GM13976 (cell line): ENCODE measurements at regions of chr10 and their contacts with region 1.

Region 1: DNA sequence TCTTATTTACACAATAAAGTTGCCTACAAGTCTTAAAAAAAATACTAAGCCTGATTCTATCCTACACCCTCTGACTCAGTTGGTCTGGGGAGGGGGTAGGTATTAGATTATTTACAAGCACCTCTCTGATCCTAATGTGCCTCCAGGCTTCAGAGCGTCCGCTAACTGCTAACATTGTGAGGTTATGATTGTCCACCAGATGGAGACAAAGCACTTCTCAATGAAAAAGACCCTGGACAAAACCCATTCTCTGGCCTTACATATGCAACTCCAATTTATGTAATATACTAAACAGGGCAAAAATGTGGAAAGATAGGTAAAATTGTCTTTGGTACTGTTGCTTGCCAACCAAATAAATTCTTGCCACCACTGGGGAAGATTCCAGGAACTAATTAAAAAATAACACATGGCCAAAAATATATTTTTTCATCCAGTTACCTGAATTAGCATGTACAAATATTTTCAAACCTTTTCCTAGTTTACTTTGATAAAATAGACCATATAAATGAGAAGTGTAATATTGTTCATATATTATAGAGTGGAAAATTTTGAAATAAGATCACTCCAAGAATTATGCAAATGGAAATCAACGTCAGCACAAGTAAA is 92.4 kb downstream of the KIF20B start:
- DNase-seq: peak; percentile 55
- CTCF ChIP-seq: peak; percentile 58

Region 2: DNA sequence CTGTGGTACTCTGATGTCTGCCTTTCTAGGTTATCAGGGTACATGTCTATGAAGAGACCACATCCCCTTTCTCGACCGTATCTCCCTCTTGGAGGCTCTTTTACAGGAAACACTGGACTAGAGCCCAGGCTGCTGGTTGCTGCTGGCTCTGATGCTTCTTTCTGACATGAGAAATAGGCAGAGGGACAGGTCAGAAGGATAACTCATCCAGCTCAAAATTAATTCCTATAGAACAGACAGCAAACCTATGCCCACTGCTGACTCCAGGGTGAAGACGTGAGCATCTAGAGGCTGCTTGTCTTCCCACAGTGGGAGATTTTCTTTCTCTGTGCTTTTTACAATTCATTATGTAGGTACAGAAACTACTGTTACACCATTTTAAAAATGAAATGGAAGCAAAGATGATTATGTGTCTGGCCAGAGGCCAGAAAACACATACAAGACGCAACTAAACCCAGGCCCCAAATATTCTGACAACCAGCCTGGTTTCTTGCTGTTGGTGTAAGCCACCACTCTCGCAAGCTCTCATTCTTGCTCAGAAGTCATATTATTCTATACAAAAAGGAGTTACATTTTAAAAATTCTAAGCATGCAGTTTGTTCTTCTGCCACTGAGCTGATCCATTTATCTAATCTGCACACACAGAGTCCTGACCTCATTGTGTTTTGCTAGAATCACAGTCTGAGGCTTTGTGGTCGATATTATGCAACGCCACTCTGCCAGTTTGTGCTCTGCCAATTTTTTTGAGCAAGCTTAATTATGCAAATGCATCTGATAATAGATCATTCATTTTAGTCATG is 331.9 kb after region 1 on chr10:
- in situ Hi-C with region 1: loop called (anchors 5 kb)
- DNase-seq: no peak
- CTCF ChIP-seq: no peak

Region 3: GRCh38 chr10:90245623-90246022 is 451.9 kb after region 1 on chr10:
- in situ Hi-C with region 1: no loop called
- DNase-seq: no peak
- CTCF ChIP-seq: no peak

Region 4: DNA sequence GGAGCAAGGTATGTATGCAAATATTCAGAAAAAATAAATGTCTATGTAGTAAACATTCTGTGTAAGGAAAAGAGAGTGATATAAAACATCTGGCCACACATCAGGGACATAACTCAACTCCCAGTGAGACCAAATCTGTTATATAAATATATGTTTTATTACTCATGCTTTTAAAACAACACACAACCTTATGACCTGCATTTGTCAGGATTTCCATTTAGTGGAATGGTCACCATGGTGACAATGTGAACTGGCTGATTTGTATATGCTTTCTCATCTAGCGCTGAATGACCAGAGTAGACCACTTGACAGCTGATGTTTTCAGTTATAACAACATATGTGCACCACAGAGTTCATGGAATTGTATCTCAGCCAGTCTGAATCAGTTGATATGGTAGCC is 512.4 kb after region 1 on chr10:
- in situ Hi-C with region 1: no loop called
- DNase-seq: no peak
- CTCF ChIP-seq: no peak

Region 5: DNA sequence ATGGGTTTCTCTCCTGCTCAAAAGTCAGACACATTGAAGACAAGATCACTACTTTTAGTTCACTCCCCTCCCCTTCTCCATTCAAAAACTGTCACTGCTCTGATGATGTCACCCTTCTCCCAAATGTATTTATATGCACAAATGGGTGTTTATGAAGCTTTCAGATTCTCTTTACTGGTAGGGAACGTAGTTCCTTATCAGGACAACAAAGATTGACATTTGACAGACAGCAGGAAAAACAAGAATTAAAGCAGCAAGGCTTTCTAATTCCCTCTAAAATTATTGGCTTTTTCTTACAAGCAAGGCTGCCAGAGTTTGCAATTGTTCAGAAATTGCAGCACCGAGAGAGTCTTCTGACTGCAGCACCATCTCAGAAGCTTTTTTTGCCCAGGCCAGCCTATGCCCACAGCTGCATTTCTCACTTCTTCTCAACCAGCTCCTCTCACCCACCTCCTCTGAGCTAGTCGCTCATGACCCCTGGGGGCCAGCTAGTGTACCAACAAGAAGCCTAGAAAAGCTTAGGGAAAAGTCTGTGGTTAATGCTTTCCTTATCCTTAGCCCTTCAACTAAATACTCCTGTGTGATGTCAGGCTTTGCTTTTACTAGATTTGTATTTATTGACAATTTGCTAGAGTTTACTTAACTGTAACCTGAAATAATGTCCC is 799.0 kb after region 1 on chr10:
- in situ Hi-C with region 1: loop called (anchors 10 kb)
- DNase-seq: peak; percentile 2
- CTCF ChIP-seq: no peak

Region 6: GRCh38 chr10:90871766-90872647 is 1078.3 kb after region 1 on chr10 and contains the start of gene RPP30:
- in situ Hi-C with region 1: loop called (anchors 25 kb)
- DNase-seq: peak; percentile 87
- CTCF ChIP-seq: no peak